ENCODE measurements at regions of chrX and their contacts with region 1.

Region 1: DNA sequence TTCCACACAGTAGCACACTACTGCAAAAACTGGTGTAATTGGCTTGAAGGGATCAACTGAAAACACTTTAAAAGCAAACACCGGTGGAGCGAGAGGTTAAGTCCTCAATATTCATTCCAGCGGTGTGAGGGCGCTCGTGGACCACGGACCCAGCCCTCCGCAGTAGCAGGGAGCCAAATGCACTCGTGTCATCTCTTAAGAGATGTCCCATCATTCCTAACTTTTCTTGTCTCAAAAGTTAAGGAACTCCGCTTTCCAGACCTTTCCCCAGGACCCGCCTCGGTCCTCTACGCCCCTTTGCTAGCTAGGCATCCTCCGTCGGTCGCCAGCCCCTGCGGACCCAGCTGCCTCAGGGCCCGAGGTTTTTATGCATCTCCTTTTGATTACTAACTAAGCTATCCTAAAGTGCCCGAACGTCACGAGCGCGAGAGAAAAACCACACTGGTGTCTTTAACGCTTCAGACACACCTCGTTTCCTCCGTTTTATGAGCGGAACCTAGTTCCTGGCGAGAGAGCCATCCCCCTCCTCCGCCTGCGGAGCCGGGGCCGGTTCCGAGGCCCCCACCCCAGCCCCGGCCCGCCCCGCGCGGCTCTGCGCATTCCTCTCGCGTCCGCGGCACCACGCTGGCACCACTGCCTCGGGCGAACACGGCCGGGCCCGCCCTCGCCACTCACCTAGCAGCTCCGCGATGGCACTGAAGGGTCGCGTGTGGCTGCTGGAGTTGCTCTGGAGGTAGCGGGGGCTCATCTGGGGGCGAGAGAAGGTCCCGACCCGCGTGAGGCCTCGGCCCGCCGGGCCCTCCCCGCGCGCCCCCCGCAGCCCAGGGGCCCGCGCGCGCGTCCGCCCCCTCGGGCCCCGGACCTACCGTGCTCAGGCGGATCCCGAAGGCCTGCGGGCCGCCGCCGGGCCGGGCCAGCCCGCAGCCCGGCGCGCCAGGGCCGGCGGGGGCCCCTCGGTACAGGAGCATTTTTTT is 723 bp downstream of the MORC4 start:
- DNase-seq: peak in 8 of 9 experiments; percentile 7 to 64 (median 45)
- ATAC-seq: peak; percentile 61
- H3K4me3 ChIP-seq: peak overlapping the region; percentile 46 to 53
- H3K4me3 Mint-ChIP-seq: peak overlapping the region; percentile 83
- H3K27ac ChIP-seq: peak overlapping the region in 1 of 2 experiments; percentile 35
- H3K27ac Mint-ChIP-seq: peak overlapping the region; percentile 86
- H3K4me1 ChIP-seq: peaks cover 4% of the 10 kb centered on the region
- H3K4me1 Mint-ChIP-seq: peaks cover 11% of the 10 kb centered on the region
- H3K27me3 ChIP-seq: no peaks in the 10 kb centered on the region
- H3K27me3 Mint-ChIP-seq: peaks cover 3% of the 10 kb centered on the region
- CTCF ChIP-seq: no peak

Region 2: DNA sequence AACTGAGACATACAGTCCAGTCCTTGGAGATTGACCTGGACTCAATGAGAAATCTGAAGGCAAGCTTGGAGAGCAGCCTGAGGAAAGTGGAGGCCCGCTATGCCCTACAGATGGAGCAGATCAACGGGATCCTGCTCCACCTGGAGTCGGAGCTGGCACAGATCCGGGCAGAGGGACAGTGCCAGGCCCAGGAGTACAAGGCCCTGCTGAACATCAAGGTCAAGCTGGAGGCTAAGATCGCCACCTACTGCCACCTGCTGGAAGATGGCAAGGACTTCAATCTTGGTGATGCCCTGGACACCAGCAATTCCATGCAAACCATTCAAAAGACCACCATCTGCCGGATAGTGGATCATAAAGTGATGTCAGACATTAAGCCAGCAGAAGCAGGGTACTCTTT is 429.8 kb after region 1 on chrX:
- CTCF ChIA-PET with region 1: interaction called, 4 read pairs
- POLR2A ChIA-PET with region 1: no interaction called
- intact Hi-C with region 1: loop called in 1 of 2 experiments (anchors 10 kb)
- DNase-seq: peak in 5 of 9 experiments; percentile 25 to 56 (median 38)
- ATAC-seq: no peak
- H3K4me3 ChIP-seq: no peak overlapping the region
- H3K4me3 Mint-ChIP-seq: no peak overlapping the region
- H3K27ac ChIP-seq: no peak overlapping the region
- H3K27ac Mint-ChIP-seq: no peak overlapping the region
- H3K4me1 ChIP-seq: no peaks in the 10 kb centered on the region
- H3K4me1 Mint-ChIP-seq: no peaks in the 10 kb centered on the region
- H3K27me3 ChIP-seq: no peaks in the 10 kb centered on the region
- H3K27me3 Mint-ChIP-seq: peaks cover 5% of the 10 kb centered on the region
- CTCF ChIP-seq: no peak

Region 3: DNA sequence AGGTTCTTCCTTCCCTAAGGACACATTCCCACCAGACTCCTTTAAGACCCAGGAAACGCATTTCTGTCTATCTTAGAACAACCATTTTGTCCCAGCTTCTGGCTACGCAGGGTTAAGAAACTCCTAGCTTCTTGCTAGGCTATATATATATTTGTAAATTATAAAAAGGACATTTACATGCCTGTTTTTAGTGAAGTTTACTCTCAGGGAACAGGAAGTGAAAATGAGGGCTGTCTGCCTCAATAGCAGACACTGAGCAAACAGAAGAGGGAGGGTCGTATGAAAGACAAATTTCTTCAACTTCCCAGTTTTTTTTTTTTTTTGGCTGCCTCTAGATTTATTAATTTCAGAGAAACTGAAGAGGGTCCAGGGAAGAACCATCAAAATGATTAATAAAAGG is 440.9 kb after region 1 on chrX:
- CTCF ChIA-PET with region 1: no interaction called
- POLR2A ChIA-PET with region 1: no interaction called
- intact Hi-C with region 1: no loop called
- DNase-seq: no peak
- ATAC-seq: no peak
- H3K4me3 ChIP-seq: no peak overlapping the region
- H3K4me3 Mint-ChIP-seq: no peak overlapping the region
- H3K27ac ChIP-seq: no peak overlapping the region
- H3K27ac Mint-ChIP-seq: no peak overlapping the region
- H3K4me1 ChIP-seq: no peaks in the 10 kb centered on the region
- H3K4me1 Mint-ChIP-seq: no peaks in the 10 kb centered on the region
- H3K27me3 ChIP-seq: no peaks in the 10 kb centered on the region
- H3K27me3 Mint-ChIP-seq: peaks cover 2% of the 10 kb centered on the region
- CTCF ChIP-seq: no peak

Measured in CD8-positive, alpha-beta T cell (primary cell).